Activated T-helper 1 cell treated with anti-CD3 and anti-CD28 coated beads, Interleukin-12 subunit alpha, Interleukin-12 subunit beta, Interleukin-2, Interleukin-4 antibody, amounts not matched to agents 30 ng/mL and 10 ng/mL and 1 ng/mL, durations not matched to agents 14 hours and 24 hours and 36 hours (primary cell): ENCODE measurements at regions of chr4 and their contacts with region 1.

Region 1: DNA sequence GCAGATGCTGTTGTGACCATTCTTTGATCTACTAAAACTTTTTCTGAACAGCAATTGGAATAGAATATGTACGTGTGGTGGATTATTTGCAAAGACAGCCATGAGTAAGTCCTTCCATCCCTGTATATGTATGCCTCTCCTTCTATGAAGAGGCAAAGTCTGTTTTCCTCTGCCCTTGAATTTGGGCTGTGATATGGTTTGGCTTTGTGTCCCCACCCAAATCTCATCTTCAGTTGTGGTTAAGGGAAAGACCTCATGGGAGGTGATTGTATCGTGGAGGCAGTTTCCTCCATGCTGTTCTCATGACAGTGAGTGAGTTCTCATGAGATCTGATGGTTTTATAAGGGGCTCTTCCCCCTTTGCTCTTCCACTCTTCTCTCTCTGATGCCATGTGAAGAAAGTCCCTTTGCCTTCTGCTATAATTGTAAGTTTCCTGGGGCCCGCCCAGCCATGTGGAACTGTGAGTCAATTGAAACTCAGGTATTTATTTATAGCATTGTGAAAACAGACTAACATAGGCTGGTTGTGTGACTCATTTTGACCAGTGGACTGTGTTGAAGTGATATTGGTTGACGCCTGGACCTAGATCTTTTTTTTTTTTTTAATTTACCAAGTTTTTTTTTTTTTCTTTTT is 108.3 kb upstream of the CAMK2D start:
- DNase-seq: peak; percentile 2
- H3K4me3 Mint-ChIP-seq: peak overlapping the region; percentile 53
- H3K27ac Mint-ChIP-seq: peak overlapping the region; percentile 88
- H3K4me1 Mint-ChIP-seq: peaks cover 16% of the 10 kb centered on the region
- H3K27me3 Mint-ChIP-seq: no peaks in the 10 kb centered on the region

Region 2: GRCh38 chr4:113815826-113816225 is 54.0 kb before region 1 on chr4:
- intact Hi-C with region 1: loop called (anchors 2 kb)
- DNase-seq: no peak
- H3K4me3 Mint-ChIP-seq: no peak overlapping the region
- H3K27ac Mint-ChIP-seq: no peak overlapping the region
- H3K4me1 Mint-ChIP-seq: peaks cover 4% of the 10 kb centered on the region
- H3K27me3 Mint-ChIP-seq: no peaks in the 10 kb centered on the region

Region 3: DNA sequence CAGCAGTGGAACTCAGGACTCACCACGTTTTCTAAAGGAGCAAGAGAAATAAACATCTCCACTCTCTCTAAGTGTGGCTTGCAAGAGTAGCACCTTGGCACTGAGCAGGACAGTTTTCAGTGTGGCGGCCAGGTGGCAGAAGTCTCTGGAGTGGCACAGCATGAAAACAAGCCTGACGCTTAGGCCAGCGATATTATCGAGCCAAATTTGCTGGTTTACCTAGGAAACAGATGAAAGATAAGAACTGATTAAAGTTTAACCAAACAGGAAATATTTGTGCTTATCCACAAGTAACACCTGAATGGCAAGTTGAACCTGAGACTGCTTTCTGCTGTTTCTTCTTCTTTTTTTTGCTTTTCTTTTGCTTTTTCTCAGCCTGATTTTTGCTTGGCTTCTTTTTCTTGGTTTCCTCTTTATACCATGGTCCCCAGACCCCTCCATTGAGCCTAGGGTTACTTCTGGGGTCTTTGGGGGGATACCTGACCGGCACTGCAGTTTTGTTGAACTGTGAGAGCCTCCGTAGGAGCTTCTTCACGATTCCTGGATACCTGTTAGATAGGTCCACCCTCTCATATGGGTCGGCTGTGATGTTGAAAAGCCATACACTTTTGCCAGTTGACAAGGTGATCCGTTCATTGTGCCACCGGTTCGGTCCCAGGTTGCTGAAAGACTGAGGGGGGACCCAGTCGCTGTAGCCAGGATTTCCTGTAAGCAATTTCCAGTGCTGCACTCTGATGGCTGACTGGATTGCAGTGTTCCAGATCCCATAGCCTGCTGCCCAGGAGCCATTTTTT is 32.3 kb after region 1 on chr4:
- intact Hi-C with region 1: loop called (anchors 1 kb)
- DNase-seq: peak; percentile 10
- H3K4me3 Mint-ChIP-seq: peak overlapping the region; percentile 22
- H3K27ac Mint-ChIP-seq: no peak overlapping the region
- H3K4me1 Mint-ChIP-seq: peaks cover 36% of the 10 kb centered on the region
- H3K27me3 Mint-ChIP-seq: no peaks in the 10 kb centered on the region